Heart right ventricle (tissue), 16 donors: ENCODE measurements at regions of chr1 and their contacts with region 1.

Region 1: GRCh38 chr1:61056573-61057439 is 25.6 kb upstream of the NFIA start:
- DNase-seq: peak; percentile 55 to 60
- ATAC-seq: peak; percentile 40 to 71 (median 58)
- H3K4me3 ChIP-seq: peak overlapping the region; percentile 60 to 86 (median 72)
- H3K27ac ChIP-seq: peak overlapping the region; percentile 76 to 100 (median 88)
- H3K4me1 ChIP-seq: peaks cover 6 to 57% (median 45%) of the 10 kb centered on the region in 9 donors
- H3K27me3 ChIP-seq: peaks cover 0 to 29% (median 0%) of the 10 kb centered on the region in 7 donors
- CTCF ChIP-seq: no peak

Region 2: GRCh38 chr1:60390593-60391282 is 666.1 kb before region 1 on chr1:
- intact Hi-C with region 1: no loop called
- DNase-seq: no peak
- ATAC-seq: no peak
- H3K4me3 ChIP-seq: no peak overlapping the region
- H3K27ac ChIP-seq: no peak overlapping the region
- H3K4me1 ChIP-seq: peaks cover 0 to 11% (median 0%) of the 10 kb centered on the region in 9 donors
- H3K27me3 ChIP-seq: no peaks in the 10 kb centered on the region
- CTCF ChIP-seq: no peak

Region 3: GRCh38 chr1:61337981-61338848 is 281.4 kb after region 1 on chr1:
- intact Hi-C with region 1: loop called in 7 of 10 experiments (anchors 2 to 10 kb)
- DNase-seq: peak; percentile 48 to 74
- ATAC-seq: peak; percentile 69 to 90 (median 87)
- H3K4me3 ChIP-seq: peak overlapping the region in 6 of 10 donors; percentile 11 to 28 (median 19)
- H3K27ac ChIP-seq: peak overlapping the region; percentile 44 to 86 (median 75)
- H3K4me1 ChIP-seq: peaks cover 8 to 64% (median 44%) of the 10 kb centered on the region in 9 donors
- H3K27me3 ChIP-seq: no peaks in the 10 kb centered on the region
- CTCF ChIP-seq: peak; percentile 19 to 80 (median 63)